ENCODE measurements at regions of chr1 and their contacts with region 1.

Region 1: GRCh38 chr1:208245185-208245705 is 1.1 kb upstream of the PLXNA2 start:
- DNase-seq: peak; percentile 35
- H3K4me3 ChIP-seq: peak overlapping the region; percentile 84 to 90 (median 87)
- H3K27ac ChIP-seq: peak overlapping the region; percentile 88 to 93 (median 88)
- H3K4me1 ChIP-seq: peaks cover 26 to 46% (median 30%) of the 10 kb centered on the region in 3 donors
- H3K27me3 ChIP-seq: peaks cover 0 to 13% (median 0%) of the 10 kb centered on the region in 4 donors
- CTCF ChIP-seq: peak; percentile 77 to 92 (median 86)
- POLR2A ChIP-seq: no peak

Region 2: DNA sequence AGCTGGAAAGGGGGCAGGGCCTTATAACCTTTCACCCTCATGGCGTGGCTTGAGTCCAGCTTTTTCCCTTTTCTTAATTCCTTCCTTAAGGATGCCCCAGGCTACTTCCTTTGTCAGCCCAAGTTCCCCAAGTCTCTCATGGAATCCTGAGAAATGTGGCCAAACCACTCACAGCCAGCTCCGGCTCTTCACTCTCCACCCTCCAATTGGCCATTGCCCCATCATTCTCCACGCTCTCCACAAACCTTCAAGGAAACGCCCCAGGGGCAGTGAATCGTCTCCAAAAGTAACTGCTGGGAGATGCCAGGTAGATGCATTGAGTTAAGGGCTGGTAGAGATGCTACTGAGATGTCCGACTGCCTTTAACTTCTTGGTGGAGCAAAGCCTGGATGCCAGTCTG is 220.8 kb before region 1 on chr1:
- intact Hi-C with region 1: loop called (anchors 5 kb)
- DNase-seq: no peak
- H3K4me3 ChIP-seq: no peak overlapping the region
- H3K27ac ChIP-seq: no peak overlapping the region
- H3K4me1 ChIP-seq: peaks cover 0 to 15% (median 5%) of the 10 kb centered on the region in 3 donors
- H3K27me3 ChIP-seq: no peaks in the 10 kb centered on the region
- CTCF ChIP-seq: no peak
- POLR2A ChIP-seq: no peak

Region 3: DNA sequence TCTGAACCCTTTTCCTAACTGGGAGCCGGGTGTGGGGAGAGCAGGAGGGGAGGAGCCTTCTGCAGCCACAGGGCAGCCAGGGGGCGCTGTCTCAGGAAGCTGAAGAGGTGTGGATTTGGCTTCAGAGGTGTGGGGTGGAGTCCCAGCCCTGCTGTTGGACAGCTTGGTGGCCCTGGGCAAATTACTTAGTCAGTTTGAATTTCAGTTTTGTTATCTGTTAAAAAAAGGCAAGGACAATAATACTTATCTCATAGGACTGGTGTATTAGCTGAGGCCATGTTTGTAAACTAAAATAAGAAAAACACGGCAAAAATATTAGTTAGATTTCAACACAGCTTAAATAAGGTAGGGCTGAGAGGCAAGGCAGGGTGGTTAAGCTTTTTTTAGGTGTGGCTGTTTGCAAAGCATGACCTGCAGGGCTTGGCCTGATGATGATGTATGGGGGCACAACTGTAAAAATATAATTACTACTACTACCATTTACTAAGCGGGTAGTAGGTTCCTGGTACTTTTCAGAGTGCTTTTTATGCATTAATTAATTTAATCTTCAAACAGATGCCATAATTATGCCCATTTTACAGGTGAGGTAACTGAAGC is 112.9 kb before region 1 on chr1:
- intact Hi-C with region 1: loop called (anchors 10 kb)
- DNase-seq: peak; percentile 3
- H3K4me3 ChIP-seq: no peak overlapping the region
- H3K27ac ChIP-seq: peak overlapping the region in 3 of 4 donors; percentile 37 to 67 (median 43)
- H3K4me1 ChIP-seq: peaks cover 4 to 47% (median 14%) of the 10 kb centered on the region in 3 donors
- H3K27me3 ChIP-seq: no peaks in the 10 kb centered on the region
- CTCF ChIP-seq: peak; percentile 53 to 96 (median 87)
- POLR2A ChIP-seq: no peak